ENCODE measurements at regions of chr19 and their contacts with region 1.

Region 1: GRCh38 chr19:38335949-38336637 is 463 bp downstream of the CATSPERG start:
- DNase-seq: peak; percentile 92 to 94
- ATAC-seq: peak; percentile 84 to 86
- H3K4me3 ChIP-seq: peak overlapping the region; percentile 77 to 91 (median 79)
- H3K27ac ChIP-seq: peak overlapping the region; percentile 96 to 99 (median 98)
- H3K4me1 ChIP-seq: peaks cover 5 to 7% of the 10 kb centered on the region in 2 donors
- H3K27me3 ChIP-seq: no peaks in the 10 kb centered on the region
- CTCF ChIP-seq: no peak
- POLR2A ChIP-seq: peak; percentile 74 to 90

Region 2: DNA sequence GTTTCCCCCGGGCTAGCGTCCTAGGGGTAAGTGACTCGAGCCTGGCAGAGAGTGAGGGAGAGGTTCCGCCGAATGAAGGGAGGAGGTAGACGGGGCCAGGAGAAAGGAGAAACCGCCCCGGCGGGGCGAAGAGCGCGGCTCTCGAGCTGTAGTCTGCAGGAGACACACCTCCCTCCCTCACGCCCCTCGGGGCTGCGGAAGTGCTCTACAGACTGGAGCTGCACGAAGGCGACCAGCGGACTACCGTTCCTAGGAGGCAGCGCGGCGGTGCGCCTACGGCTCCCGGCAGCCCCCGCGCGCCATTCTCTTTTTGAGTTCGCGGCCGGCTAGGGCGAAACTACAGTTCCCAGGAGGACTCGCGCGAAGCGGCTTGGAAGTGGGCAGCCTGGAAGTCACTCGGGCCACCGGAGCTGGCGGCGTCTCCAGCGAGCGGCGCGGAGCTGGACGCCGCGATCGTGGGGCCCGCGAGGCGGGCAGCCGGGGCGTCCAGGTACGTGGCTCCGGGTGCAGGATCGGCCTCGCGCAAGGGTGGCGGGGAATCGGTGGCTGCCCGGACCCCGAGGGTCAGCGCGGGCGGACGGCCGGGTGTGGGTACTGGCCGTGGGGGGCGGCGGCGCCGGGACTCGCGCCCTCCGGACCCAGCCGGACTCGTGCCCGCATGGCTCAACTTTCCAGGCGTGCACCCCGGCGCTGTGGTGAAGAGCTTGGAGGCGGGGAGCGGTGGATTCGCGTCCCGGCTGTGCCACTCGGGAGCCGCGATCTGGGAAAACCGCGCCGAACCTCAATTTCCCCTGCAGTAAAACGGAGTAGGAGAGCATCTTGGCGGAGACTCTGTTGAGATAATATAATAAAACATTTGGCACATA is 429.0 kb before region 1 on chr19 and contains the start of gene SIPA1L3:
- in situ Hi-C with region 1: loop called (anchors 25 kb)
- intact Hi-C with region 1: loop called (anchors 2 kb)
- DNase-seq: peak; percentile 89 to 90
- ATAC-seq: peak; percentile 97
- H3K4me3 ChIP-seq: peak within 1 kb of the TSS; percentile 84 to 98 (median 90)
- H3K27ac ChIP-seq: peak within 1 kb of the TSS; percentile 62 to 85 (median 83)
- H3K4me1 ChIP-seq: peaks cover 9 to 16% of the 10 kb centered on the region in 2 donors
- H3K27me3 ChIP-seq: no peaks in the 10 kb centered on the region
- CTCF ChIP-seq: peak in 1 of 5 experiments; percentile 3
- POLR2A ChIP-seq: peak; percentile 69 to 87
- total RNA-seq, gene SIPA1L3: 4.1 to 18.7 (median 6.1) TPM

Region 3: GRCh38 chr19:38173291-38174041 is 162.6 kb before region 1 on chr19:
- in situ Hi-C with region 1: no loop called
- intact Hi-C with region 1: loop called (anchors 1 kb)
- DNase-seq: peak; percentile 88 to 98
- ATAC-seq: peak; percentile 92 to 95
- H3K4me3 ChIP-seq: peak overlapping the region; percentile 20 to 46 (median 39)
- H3K27ac ChIP-seq: peak overlapping the region; percentile 90 to 96 (median 93)
- H3K4me1 ChIP-seq: peaks cover 18 to 19% of the 10 kb centered on the region in 2 donors
- H3K27me3 ChIP-seq: no peaks in the 10 kb centered on the region
- CTCF ChIP-seq: no peak
- POLR2A ChIP-seq: peak; percentile 48 to 65

Region 4: GRCh38 chr19:38239816-38240215 is 96.3 kb before region 1 on chr19:
- in situ Hi-C with region 1: loop called (anchors 5 kb)
- intact Hi-C with region 1: loop called (anchors 1 kb)
- DNase-seq: no peak
- ATAC-seq: no peak
- H3K4me3 ChIP-seq: no peak overlapping the region
- H3K27ac ChIP-seq: peak overlapping the region in 1 of 4 donors; percentile 46
- H3K4me1 ChIP-seq: peaks cover 3% of the 10 kb centered on the region in 2 donors
- H3K27me3 ChIP-seq: peaks cover 0 to 4% (median 0%) of the 10 kb centered on the region in 3 donors
- CTCF ChIP-seq: no peak
- POLR2A ChIP-seq: no peak

Region 5: GRCh38 chr19:38315657-38316476 is 20.2 kb before region 1 on chr19 and contains the start of gene YIF1B:
- in situ Hi-C with region 1: no loop called
- intact Hi-C with region 1: loop called (anchors 1 kb)
- DNase-seq: peak; percentile 95 to 97
- ATAC-seq: peak; percentile 98
- H3K4me3 ChIP-seq: peak within 1 kb of the TSS; percentile 59 to 76 (median 66)
- H3K27ac ChIP-seq: peak within 1 kb of the TSS; percentile 85 to 93 (median 92)
- H3K4me1 ChIP-seq: peaks cover 6 to 9% of the 10 kb centered on the region in 2 donors
- H3K27me3 ChIP-seq: peaks cover 0 to 11% (median 0%) of the 10 kb centered on the region in 3 donors
- CTCF ChIP-seq: no peak
- POLR2A ChIP-seq: peak in 1 of 2 donors; percentile 36
- total RNA-seq, gene YIF1B: 28.3 to 39.5 (median 31.9) TPM

Region 6: DNA sequence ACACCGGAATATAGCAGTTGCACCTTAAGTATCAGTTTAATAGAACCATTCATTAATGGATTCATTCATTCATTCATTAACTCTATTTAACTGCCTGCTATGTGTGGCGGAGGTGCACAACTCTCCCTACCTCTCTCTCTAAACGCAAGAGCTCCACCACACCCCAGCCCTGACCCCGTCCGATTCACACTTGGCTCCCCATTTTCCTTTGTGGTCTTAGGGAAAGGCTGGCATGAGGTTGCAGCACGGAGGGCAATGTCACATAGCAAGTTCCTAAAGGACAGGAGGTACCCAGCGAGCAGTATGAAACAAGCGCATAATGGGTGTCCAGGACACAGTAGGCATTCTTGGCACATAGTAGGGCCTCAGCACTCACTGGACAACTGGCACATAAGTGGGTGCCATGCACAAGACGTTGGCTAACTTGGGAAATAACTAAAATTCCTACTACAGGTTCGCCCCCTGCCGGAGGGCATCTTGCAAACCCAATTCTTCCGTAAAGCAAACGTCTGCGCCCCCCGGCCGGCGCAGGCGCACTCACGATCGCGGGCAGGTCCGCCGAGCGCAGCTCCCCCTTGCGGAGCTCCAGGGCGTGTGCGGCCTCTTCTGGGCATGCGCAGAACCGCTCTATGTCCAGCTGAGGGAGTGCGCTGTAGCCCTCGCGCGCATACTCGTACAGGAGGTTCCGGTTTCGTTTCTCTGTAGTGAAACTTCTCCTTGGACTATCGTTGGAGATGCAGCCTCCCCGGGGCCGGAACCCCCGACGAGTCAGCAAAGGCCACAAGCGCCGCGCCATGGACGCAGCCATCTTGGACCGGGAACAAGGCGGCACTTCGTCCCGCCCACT is 594.1 kb after region 1 on chr19 and contains the start of gene SARS2:
- in situ Hi-C with region 1: no loop called
- intact Hi-C with region 1: loop called (anchors 1 kb)
- DNase-seq: peak; percentile 84 to 86
- ATAC-seq: peak; percentile 87 to 91
- H3K4me3 ChIP-seq: peak within 1 kb of the TSS; percentile 64 to 86 (median 76)
- H3K27ac ChIP-seq: peak within 1 kb of the TSS; percentile 81 to 94 (median 88)
- H3K4me1 ChIP-seq: peaks cover 14 to 17% of the 10 kb centered on the region in 2 donors
- H3K27me3 ChIP-seq: no peaks in the 10 kb centered on the region
- CTCF ChIP-seq: peak; percentile 97 to 100 (median 98)
- POLR2A ChIP-seq: no peak
- total RNA-seq, gene SARS2: 12.1 to 30.0 (median 27.8) TPM

Measured in gastrocnemius medialis (tissue), 4 donors.